Right cardiac atrium (tissue), 5 donors: ENCODE measurements at regions of chr4 and their contacts with region 1.

Region 1: GRCh38 chr4:110049951-110050925 is 137.6 kb downstream of the EGF start:
- DNase-seq: peak in 1 of 3 donors; percentile 17
- ATAC-seq: no peak
- H3K4me3 ChIP-seq: no peak overlapping the region
- H3K27ac ChIP-seq: no peak overlapping the region
- H3K4me1 ChIP-seq: no peaks in the 10 kb centered on the region
- H3K27me3 ChIP-seq: no peaks in the 10 kb centered on the region

Region 2: DNA sequence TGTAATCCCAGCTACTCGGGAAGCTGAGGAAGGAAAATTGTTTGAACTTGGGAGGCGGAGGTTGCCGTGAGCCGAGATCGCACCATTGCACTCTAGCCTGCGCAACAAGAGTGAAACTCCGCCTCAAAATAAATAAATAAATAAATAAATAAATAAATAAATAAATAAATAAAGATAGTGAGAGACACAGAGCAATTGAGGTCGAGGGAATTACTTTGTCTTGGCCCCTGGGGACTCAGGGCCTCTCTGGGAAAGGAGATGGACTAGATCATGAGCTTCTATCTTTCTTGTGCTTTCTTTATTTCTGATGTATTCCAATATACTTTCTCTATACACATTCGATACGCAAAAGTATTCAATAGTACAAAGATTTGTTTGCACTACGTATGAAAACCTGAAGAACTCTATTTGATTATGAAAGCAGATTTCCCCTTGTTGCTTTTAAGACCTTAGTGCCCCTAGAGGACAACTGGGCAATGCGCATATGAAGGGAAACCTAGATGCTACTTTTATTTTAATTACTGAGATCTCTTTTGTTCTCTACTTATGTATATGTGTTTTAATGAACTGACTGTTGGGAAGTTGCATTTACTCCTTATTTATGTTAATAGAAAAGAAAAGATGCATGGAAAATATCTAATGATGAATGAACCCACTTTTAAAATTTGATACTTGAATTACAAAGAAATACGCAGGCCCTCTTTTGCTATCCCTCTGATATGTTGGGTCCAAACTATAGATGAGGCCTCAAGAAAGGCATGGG is 160.9 kb after region 1 on chr4:
- intact Hi-C with region 1: loop called (anchors 5 to 10 kb)
- DNase-seq: no peak
- ATAC-seq: no peak
- H3K4me3 ChIP-seq: no peak overlapping the region
- H3K27ac ChIP-seq: no peak overlapping the region
- H3K4me1 ChIP-seq: no peaks in the 10 kb centered on the region
- H3K27me3 ChIP-seq: no peaks in the 10 kb centered on the region